B cell (primary cell): ENCODE measurements at regions of chr17 and their contacts with region 1.

Region 1: DNA sequence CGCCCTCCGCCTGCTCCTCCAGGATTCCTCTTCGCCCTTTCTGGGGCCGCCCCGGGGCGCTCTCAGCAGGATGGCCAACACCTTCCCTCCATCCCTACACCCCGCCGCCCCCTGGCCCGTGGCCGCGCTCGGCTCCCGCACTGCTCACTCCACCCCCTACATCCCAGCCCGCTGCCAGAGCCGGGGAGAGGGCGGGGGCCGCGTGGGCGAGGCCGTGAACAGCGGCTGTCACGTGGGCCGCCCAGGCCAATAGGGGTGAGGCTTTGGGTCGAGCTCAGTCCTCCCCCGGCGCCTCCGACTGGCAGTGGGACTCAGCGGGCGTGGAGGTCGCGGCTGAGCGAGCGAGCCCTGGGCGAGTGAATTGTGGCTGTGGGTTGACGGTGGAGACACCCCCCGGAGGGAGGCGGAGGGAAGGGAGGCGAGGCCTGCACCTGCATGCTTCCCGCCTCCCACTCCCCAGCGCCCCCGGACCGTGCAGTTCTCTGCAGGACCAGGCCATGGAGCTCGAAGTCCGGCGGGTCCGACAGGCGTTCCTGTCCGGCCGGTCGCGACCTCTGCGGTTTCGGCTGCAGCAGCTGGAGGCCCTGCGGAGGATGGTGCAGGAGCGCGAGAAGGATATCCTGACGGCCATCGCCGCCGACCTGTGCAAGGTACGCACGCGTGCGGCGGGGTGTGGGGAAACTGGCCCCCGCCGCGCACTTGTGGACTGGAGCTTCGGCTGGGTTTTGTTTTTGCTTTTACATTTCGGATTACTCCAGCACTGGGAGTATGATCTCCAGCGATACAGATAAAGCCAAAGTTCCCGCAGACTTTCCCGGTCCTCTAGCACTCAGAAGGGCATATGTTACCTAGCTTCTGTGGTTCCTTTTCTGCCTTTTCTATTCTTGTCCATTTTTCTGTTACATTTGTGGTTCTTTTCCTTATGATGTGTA is at the start of gene ALDH3A2:
- DNase-seq: peak; percentile 92
- ATAC-seq: peak; percentile 94
- H3K4me3 ChIP-seq: peak within 1 kb of the TSS; percentile 35 to 95 (median 83)
- H3K4me3 Mint-ChIP-seq: peak within 1 kb of the TSS; percentile 98
- H3K27ac ChIP-seq: peak within 1 kb of the TSS; percentile 72 to 76
- H3K27ac Mint-ChIP-seq: peak within 1 kb of the TSS; percentile 97
- H3K4me1 ChIP-seq: peaks cover 16 to 19% of the 10 kb centered on the region in 2 donors
- H3K4me1 Mint-ChIP-seq: peaks cover 35% of the 10 kb centered on the region
- H3K27me3 ChIP-seq: no peaks in the 10 kb centered on the region
- H3K27me3 Mint-ChIP-seq: peaks cover 4% of the 10 kb centered on the region
- CTCF ChIP-seq: no peak
- total RNA-seq, gene ALDH3A2: 31.5 and 35.1 TPM in 2 replicates

Region 2: GRCh38 chr17:19464031-19465026 is 184.4 kb before region 1 on chr17:
- CTCF ChIA-PET with region 1: no interaction called
- POLR2A ChIA-PET with region 1: interaction called, 3 read pairs
- intact Hi-C with region 1: loop called (anchors 1 kb)
- DNase-seq: no peak
- ATAC-seq: no peak
- H3K4me3 ChIP-seq: peak overlapping the region in 1 of 5 experiments; percentile 25
- H3K4me3 Mint-ChIP-seq: peak overlapping the region; percentile 74
- H3K27ac ChIP-seq: peak overlapping the region; percentile 78 to 86
- H3K27ac Mint-ChIP-seq: peak overlapping the region; percentile 91
- H3K4me1 ChIP-seq: peaks cover 47 to 54% of the 10 kb centered on the region in 2 donors
- H3K4me1 Mint-ChIP-seq: peaks cover 48% of the 10 kb centered on the region
- H3K27me3 ChIP-seq: no peaks in the 10 kb centered on the region
- H3K27me3 Mint-ChIP-seq: no peaks in the 10 kb centered on the region
- CTCF ChIP-seq: no peak

Region 3: GRCh38 chr17:19507775-19508576 is 140.8 kb before region 1 on chr17:
- CTCF ChIA-PET with region 1: interaction called, 5 read pairs
- POLR2A ChIA-PET with region 1: no interaction called
- intact Hi-C with region 1: loop called (anchors 1 kb)
- DNase-seq: peak; percentile 90
- ATAC-seq: peak; percentile 75
- H3K4me3 ChIP-seq: peak overlapping the region; percentile 57 to 98 (median 89)
- H3K4me3 Mint-ChIP-seq: peak overlapping the region; percentile 90
- H3K27ac ChIP-seq: peak overlapping the region; percentile 31 to 66
- H3K27ac Mint-ChIP-seq: peak overlapping the region; percentile 97
- H3K4me1 ChIP-seq: peaks cover 5 to 9% of the 10 kb centered on the region in 2 donors
- H3K4me1 Mint-ChIP-seq: peaks cover 9% of the 10 kb centered on the region
- H3K27me3 ChIP-seq: no peaks in the 10 kb centered on the region
- H3K27me3 Mint-ChIP-seq: no peaks in the 10 kb centered on the region
- CTCF ChIP-seq: no peak

Region 4: DNA sequence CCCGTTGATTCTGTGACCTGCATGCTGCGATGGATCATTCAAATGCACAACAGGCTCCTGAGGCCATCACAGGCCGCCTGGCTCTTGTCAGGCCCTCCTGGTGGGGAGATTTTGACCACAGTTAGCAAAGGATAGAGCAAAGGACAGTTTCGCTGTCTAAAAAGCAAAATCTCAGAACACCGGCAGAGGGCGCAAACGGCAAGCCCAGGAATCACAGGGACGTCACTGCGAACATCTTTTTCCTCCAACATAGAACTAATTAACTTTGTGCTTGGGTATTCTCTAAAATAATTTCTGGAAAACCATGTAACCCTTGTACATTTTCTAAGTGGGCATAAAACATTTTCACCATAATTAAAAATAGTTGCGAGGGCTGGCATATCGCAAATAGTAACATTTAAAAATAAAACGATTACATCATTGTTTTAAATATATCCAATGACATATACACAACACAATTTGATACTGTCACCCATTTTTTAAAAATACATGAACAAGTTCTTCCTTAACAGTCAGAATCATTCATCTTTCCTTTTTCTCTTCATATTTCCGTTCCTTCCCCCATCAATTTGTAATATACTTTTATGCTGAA is 134.7 kb before region 1 on chr17:
- CTCF ChIA-PET with region 1: interaction called, 5 read pairs
- POLR2A ChIA-PET with region 1: interaction called, 3 read pairs
- intact Hi-C with region 1: loop called (anchors 1 kb)
- DNase-seq: peak; percentile 82
- ATAC-seq: peak; percentile 75
- H3K4me3 ChIP-seq: no peak overlapping the region
- H3K4me3 Mint-ChIP-seq: peak overlapping the region; percentile 35
- H3K27ac ChIP-seq: no peak overlapping the region
- H3K27ac Mint-ChIP-seq: no peak overlapping the region
- H3K4me1 ChIP-seq: peaks cover 0 to 5% of the 10 kb centered on the region in 2 donors
- H3K4me1 Mint-ChIP-seq: peaks cover 6% of the 10 kb centered on the region
- H3K27me3 ChIP-seq: no peaks in the 10 kb centered on the region
- H3K27me3 Mint-ChIP-seq: no peaks in the 10 kb centered on the region
- CTCF ChIP-seq: peak; percentile 94

Region 5: GRCh38 chr17:19753049-19753444 is 104.3 kb after region 1 on chr17:
- CTCF ChIA-PET with region 1: interaction called, 4 read pairs
- POLR2A ChIA-PET with region 1: no interaction called
- intact Hi-C with region 1: loop called (anchors 2 kb)
- DNase-seq: no peak
- ATAC-seq: no peak
- H3K4me3 ChIP-seq: no peak overlapping the region
- H3K4me3 Mint-ChIP-seq: no peak overlapping the region
- H3K27ac ChIP-seq: no peak overlapping the region
- H3K27ac Mint-ChIP-seq: no peak overlapping the region
- H3K4me1 ChIP-seq: peaks cover 19 to 31% of the 10 kb centered on the region in 2 donors
- H3K4me1 Mint-ChIP-seq: peaks cover 41% of the 10 kb centered on the region
- H3K27me3 ChIP-seq: no peaks in the 10 kb centered on the region
- H3K27me3 Mint-ChIP-seq: peaks cover 5% of the 10 kb centered on the region
- CTCF ChIP-seq: no peak

Region 6: DNA sequence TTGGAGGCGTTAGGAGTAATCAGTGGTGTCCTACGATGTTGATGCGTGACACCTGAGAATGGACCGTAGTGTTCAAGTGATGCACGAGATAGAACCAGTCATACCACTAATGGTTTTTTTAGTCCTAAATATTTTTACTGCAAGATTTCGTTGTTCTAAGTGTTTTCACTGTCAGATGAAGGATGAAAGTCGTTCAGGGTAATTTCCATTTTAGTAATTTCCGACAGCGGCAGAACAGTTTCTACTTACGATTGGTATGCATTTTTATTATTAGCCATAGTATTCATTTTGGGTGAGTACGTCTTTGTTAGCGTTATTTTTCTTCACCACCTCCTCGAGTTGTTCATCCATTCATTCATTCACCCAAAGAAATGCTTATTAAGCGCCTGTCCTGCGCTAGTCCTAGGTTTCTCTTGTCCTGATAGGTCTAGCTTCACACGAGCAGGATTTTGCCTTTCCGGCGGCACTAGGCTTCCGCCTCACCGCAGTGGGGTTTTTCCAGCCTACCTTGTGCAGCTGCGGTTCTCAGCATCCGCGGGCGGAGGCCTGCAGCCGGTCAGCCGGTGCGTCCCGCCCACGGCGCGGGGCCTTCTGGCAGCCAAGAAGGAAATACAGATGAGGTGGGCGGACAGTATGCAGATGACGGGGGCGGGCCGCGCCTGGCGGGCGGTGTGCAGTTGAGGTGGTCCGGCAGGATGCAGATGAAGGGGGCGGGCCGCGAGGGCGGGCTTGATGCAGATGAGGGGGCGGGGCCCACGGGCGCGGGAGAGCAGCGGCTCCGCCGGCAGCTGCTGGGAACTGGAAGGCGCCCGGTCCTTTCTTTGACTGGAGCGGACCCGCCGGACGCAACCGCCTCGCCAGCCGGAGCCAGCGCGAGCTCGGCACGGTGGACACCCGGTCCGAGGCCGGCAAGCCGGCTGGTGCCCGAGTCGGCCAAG is 506.8 kb after region 1 on chr17:
- CTCF ChIA-PET with region 1: no interaction called
- POLR2A ChIA-PET with region 1: no interaction called
- intact Hi-C with region 1: loop called (anchors 5 kb)
- DNase-seq: peak; percentile 99
- ATAC-seq: peak; percentile 96
- H3K4me3 ChIP-seq: peak overlapping the region; percentile 8 to 77 (median 72)
- H3K4me3 Mint-ChIP-seq: no peak overlapping the region
- H3K27ac ChIP-seq: peak overlapping the region; percentile 56 to 85
- H3K27ac Mint-ChIP-seq: no peak overlapping the region
- H3K4me1 ChIP-seq: peaks cover 27 to 35% of the 10 kb centered on the region in 2 donors
- H3K4me1 Mint-ChIP-seq: peaks cover 4% of the 10 kb centered on the region
- H3K27me3 ChIP-seq: no peaks in the 10 kb centered on the region
- H3K27me3 Mint-ChIP-seq: no peaks in the 10 kb centered on the region
- CTCF ChIP-seq: no peak